T-cell (primary cell): ENCODE measurements at regions of chr2 and their contacts with region 1.

Region 1: DNA sequence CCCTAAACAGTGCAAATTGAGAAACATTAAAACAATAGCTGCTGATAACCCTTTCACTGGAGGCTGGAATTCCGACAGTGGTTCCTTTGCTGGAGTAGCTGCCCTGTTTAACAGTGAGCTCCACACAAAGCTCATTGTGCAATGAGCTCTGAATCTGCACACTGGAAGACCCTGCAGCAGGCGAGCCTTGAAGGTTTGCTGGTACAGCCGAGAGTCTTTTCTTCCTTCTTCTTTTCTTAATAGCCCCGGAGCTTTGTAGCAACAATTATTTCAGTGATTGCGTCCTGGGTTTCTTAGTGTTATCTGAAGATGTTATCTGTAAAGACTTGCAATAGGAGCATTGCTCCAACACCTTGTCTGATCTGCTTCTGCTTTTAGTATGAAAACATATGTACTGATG is 50.8 kb upstream of the CXCR4 start:
- DNase-seq: no peak
- ATAC-seq: no peak
- H3K4me3 ChIP-seq: no peak overlapping the region
- H3K4me3 Mint-ChIP-seq: no peak overlapping the region
- H3K27ac ChIP-seq: no peak overlapping the region
- H3K27ac Mint-ChIP-seq: no peak overlapping the region
- H3K4me1 ChIP-seq: peaks cover 2 to 6% of the 10 kb centered on the region in 2 experiments
- H3K4me1 Mint-ChIP-seq: peaks cover 18 to 27% (median 19%) of the 10 kb centered on the region in 3 donors
- H3K27me3 ChIP-seq: no peaks in the 10 kb centered on the region
- H3K27me3 Mint-ChIP-seq: no peaks in the 10 kb centered on the region

Region 2: DNA sequence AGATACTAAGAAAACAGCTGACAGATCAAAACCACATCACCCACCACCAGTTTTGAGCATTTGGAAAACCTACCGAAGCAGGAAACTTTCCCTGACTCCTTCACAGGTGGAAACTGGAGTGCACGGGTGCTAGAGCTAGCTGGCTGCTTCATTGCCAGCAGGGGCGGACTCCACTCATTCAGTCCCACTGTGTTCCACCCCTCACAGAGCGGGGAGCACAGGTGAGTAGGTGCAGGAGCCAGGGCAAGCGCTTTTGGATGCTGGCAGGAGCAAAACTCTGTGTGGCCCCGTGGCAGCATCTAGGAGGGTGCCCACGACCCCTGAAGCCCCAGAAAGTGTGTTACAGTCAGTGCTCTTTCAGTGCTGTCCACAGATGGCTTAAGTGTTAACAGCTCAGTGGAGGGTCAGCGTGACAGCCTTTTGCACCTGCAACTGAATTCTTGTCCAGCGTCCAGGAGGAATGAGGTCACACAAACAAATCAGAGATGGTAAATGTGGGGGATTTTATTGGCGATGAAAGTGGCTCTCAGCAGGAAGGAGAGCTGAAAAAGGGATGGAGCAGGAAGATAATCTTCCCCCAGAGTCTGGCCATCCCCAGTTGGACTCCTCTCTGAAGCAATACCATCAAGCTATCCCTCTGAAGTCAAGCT is 1521.0 kb before region 1 on chr2:
- CTCF ChIA-PET with region 1: interaction called in 1 of 2 experiments, 10 read pairs
- POLR2A ChIA-PET with region 1: no interaction called
- DNase-seq: no peak
- ATAC-seq: no peak
- H3K4me3 ChIP-seq: no peak overlapping the region
- H3K4me3 Mint-ChIP-seq: no peak overlapping the region
- H3K27ac ChIP-seq: no peak overlapping the region
- H3K27ac Mint-ChIP-seq: no peak overlapping the region
- H3K4me1 ChIP-seq: no peaks in the 10 kb centered on the region
- H3K4me1 Mint-ChIP-seq: peaks cover 0 to 2% (median 0%) of the 10 kb centered on the region in 3 donors
- H3K27me3 ChIP-seq: peaks cover 0 to 4% of the 10 kb centered on the region in 2 experiments
- H3K27me3 Mint-ChIP-seq: no peaks in the 10 kb centered on the region

Region 3: DNA sequence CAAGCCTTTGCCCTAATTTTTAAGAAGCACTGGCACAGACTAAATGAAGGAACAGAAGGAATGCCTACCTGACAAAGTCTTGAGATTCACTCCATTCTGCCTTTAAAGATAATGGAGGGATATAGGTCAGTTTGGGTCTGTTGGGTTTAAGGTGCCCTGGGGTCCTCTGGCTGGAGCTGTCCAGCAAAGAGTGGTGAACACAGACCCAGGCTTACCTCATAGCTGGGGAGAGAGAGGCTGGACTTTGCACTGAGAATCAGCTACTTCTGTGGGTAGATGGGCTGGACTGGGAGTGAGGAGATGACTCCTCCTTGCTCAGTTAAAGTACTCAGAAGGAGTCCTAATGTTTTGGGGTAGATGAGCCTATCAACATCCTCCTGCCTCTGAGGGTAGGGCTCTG is 13.6 kb after region 1 on chr2:
- CTCF ChIA-PET with region 1: no interaction called
- POLR2A ChIA-PET with region 1: no interaction called
- DNase-seq: no peak
- ATAC-seq: no peak
- H3K4me3 ChIP-seq: no peak overlapping the region
- H3K4me3 Mint-ChIP-seq: no peak overlapping the region
- H3K27ac ChIP-seq: no peak overlapping the region
- H3K27ac Mint-ChIP-seq: peak overlapping the region in 1 of 2 donors; percentile 72
- H3K4me1 ChIP-seq: no peaks in the 10 kb centered on the region
- H3K4me1 Mint-ChIP-seq: peaks cover 9 to 24% (median 23%) of the 10 kb centered on the region in 3 donors
- H3K27me3 ChIP-seq: no peaks in the 10 kb centered on the region
- H3K27me3 Mint-ChIP-seq: peaks cover 0 to 3% of the 10 kb centered on the region in 2 donors

Region 4: DNA sequence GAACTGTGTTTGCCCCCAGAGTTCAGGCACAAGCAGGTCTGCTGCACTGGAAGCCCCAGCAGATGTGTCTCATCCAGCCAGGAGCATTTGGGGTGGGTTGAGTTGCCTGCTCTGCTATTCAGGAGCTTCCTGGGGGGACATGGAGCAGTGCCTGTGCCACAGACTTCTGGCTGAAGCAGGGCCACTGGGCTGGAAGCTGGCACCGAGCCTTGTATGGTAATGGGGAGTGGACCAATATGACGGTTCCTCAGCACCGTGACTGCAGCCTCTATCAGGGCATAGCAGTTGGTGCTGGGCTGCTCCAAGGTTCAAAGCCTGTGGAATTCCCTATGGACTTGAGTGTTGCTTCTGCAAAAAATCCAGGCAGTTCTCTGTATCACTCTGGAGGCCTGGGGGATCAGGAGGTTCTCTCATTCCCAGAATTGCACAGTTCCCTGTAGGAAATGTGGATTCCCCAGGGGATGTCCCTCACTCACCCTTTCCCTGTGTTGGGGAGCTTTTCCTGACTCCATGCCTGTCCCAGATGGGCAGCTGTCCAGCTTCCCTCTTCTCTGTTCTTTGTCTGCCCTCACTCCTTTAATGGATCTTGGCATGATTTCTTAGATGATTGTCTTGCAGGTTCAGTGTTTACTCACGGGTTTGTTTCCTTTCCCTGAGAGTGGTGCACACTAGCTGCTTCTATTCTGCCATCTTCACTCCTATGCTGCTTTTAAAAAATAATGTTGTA is 559.4 kb after region 1 on chr2:
- CTCF ChIA-PET with region 1: no interaction called
- POLR2A ChIA-PET with region 1: no interaction called
- DNase-seq: no peak
- ATAC-seq: no peak
- H3K4me3 ChIP-seq: no peak overlapping the region
- H3K4me3 Mint-ChIP-seq: no peak overlapping the region
- H3K27ac ChIP-seq: no peak overlapping the region
- H3K27ac Mint-ChIP-seq: no peak overlapping the region
- H3K4me1 ChIP-seq: no peaks in the 10 kb centered on the region
- H3K4me1 Mint-ChIP-seq: no peaks in the 10 kb centered on the region
- H3K27me3 ChIP-seq: peaks cover 0 to 9% of the 10 kb centered on the region in 2 experiments
- H3K27me3 Mint-ChIP-seq: peaks cover 4 to 9% of the 10 kb centered on the region in 2 donors